Activated T-helper 2 cell treated with anti-CD3 and anti-CD28 coated beads, Interferon-gamma antibody, Interleukin-2, Interleukin-4, amounts not matched to agents 10 μg/mL and 5 μg/mL and 100 μg/mL, durations not matched to agents 14 hours and 24 hours and 36 hours (primary cell): ENCODE measurements at regions of chr16 and their contacts with region 1.

Region 1: DNA sequence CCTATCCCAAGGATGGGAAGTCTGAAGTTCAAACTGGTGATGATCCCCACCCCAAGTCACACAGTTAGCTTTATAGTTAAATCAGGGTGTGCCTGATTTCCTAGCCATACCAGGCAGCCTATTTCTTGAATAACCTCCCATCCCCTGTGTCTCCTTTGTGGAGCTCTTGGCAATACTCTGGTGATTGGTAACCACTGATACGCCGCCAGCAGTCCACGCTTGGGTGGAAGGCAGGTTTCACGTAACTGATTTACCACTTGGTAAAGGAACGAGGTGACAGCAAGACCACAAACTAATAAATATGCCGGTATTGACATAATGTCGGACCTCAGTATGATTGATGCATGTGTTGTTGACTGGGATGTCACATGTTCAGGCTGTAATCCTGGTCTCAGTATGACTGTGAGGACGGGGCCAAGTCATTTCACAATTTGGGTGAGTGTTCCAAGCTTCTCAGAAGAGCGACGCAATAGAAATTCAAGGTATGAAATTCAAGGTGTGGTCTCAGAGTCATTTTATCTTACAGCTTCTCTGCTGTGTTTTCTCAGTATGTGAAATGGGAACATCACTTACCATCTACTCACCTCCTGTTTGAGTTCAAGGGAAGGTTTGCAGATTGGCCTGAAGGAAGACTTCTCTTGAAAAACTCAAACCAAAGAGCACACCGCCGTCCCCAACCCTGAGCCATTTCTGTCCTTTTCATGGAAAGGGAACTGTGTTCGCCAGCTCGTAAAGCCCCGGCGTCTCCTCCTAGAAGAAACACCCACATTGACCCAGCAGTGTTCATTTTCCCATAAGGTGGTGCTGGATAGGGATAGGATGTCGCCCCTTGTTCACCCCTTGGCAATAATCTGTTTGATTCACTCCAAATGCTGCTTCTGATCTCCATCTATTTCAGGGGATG is 678.9 kb downstream of the WWOX start:
- DNase-seq: peak; percentile 54
- H3K4me3 Mint-ChIP-seq: peak overlapping the region; percentile 58
- H3K27ac Mint-ChIP-seq: peak overlapping the region; percentile 91
- H3K4me1 Mint-ChIP-seq: peaks cover 61% of the 10 kb centered on the region
- H3K27me3 Mint-ChIP-seq: no peaks in the 10 kb centered on the region

Region 2: GRCh38 chr16:78742501-78743283 is 35.7 kb before region 1 on chr16:
- intact Hi-C with region 1: loop called (anchors 2 kb)
- DNase-seq: peak; percentile 68
- H3K4me3 Mint-ChIP-seq: peak overlapping the region; percentile 72
- H3K27ac Mint-ChIP-seq: peak overlapping the region; percentile 86
- H3K4me1 Mint-ChIP-seq: peaks cover 17% of the 10 kb centered on the region
- H3K27me3 Mint-ChIP-seq: peaks cover 8% of the 10 kb centered on the region

Region 3: GRCh38 chr16:78800523-78800922 is 22.2 kb after region 1 on chr16:
- intact Hi-C with region 1: loop called (anchors 1 kb)
- DNase-seq: no peak
- H3K4me3 Mint-ChIP-seq: no peak overlapping the region
- H3K27ac Mint-ChIP-seq: no peak overlapping the region
- H3K4me1 Mint-ChIP-seq: peaks cover 23% of the 10 kb centered on the region
- H3K27me3 Mint-ChIP-seq: peaks cover 1% of the 10 kb centered on the region

Region 4: GRCh38 chr16:78900044-78900811 is 121.9 kb after region 1 on chr16:
- intact Hi-C with region 1: loop called (anchors 1 kb)
- DNase-seq: no peak
- H3K4me3 Mint-ChIP-seq: no peak overlapping the region
- H3K27ac Mint-ChIP-seq: peak overlapping the region; percentile 28
- H3K4me1 Mint-ChIP-seq: peaks cover 37% of the 10 kb centered on the region
- H3K27me3 Mint-ChIP-seq: no peaks in the 10 kb centered on the region

Region 5: DNA sequence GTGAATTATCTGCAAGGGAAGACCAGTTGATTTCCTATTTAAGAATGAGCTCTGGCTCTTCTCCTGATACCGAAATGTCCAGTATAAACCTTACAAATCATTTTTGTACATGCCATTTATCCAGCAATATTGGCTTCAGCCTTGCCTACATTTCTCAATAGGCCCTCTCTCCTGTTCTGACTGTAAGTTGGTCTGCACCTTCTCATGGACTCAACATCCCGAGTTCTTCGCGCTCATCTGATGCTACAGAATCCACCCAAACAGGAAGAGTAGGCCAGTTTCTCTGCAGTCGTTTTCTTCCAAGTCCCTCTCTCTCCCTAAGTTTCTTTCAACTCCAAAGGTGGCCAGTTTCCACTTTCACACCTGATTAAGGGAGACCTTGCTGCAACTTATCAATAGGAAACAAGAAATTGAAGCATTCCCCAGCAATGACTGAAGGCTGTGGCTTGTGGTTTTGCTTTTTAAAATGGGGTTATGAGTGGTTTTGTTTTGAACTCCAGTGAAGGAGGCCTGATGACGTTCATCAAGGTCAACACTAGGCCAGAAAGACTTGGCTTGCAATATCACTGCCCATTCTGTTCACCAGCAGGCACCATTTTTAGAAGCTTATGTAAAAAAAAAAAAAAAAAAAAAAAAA is 439.1 kb after region 1 on chr16:
- intact Hi-C with region 1: loop called (anchors 5 kb)
- DNase-seq: peak; percentile 34
- H3K4me3 Mint-ChIP-seq: no peak overlapping the region
- H3K27ac Mint-ChIP-seq: peak overlapping the region; percentile 13
- H3K4me1 Mint-ChIP-seq: peaks cover 32% of the 10 kb centered on the region
- H3K27me3 Mint-ChIP-seq: no peaks in the 10 kb centered on the region

Region 6: DNA sequence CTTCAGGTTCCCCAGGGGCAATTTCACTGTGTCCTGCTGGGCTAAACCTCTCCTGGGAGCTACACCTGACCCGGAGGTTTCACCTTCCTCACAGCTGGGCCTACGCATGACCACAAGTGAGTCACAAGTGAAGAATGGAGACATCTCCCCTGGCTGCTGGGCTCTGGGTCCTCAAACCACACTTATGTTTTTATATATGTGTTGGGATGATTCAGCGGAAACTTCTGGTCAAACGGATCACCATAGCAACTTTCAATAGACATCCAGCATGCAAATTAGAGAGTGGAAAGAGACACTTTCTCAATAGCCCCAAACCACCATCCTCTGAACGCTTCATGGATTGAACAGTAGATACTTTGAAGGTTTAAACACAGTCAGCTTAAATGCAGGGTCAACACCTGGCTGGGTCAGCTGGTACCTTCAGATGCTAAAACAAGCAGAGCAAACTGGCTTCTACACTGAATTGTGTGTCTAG is 850.2 kb after region 1 on chr16:
- intact Hi-C with region 1: loop called (anchors 2 kb)
- DNase-seq: peak; percentile 74
- H3K4me3 Mint-ChIP-seq: peak overlapping the region; percentile 9
- H3K27ac Mint-ChIP-seq: peak overlapping the region; percentile 86
- H3K4me1 Mint-ChIP-seq: peaks cover 56% of the 10 kb centered on the region
- H3K27me3 Mint-ChIP-seq: peaks cover 12% of the 10 kb centered on the region